K562 (cell line): ENCODE measurements at regions of chr7 and their contacts with region 1.

Region 1: GRCh38 chr7:100081535-100082102 is at the start of gene ZNF3:
- DNase-seq: peak; percentile 92 to 100 (median 95)
- ATAC-seq: peak; percentile 92
- H3K4me3 ChIP-seq: peak within 1 kb of the TSS; percentile 67
- H3K27ac ChIP-seq: peak within 1 kb of the TSS; percentile 90
- H3K4me1 ChIP-seq: peaks cover 10 to 26% of the 10 kb centered on the region in 2 experiments; a peak in 4 of 5 replicates
- H3K27me3 ChIP-seq: no peaks in the 10 kb centered on the region
- CTCF ChIP-seq: peak; percentile 94 to 96 (median 95)
- EP300 ChIP-seq: peak; percentile 79
- POLR2A ChIP-seq: peak; percentile 84
- RAD21 ChIP-seq: peak; percentile 86 to 91
- polyA plus RNA-seq, gene ZNF3: 30.0 to 51.5 TPM

Region 2: DNA sequence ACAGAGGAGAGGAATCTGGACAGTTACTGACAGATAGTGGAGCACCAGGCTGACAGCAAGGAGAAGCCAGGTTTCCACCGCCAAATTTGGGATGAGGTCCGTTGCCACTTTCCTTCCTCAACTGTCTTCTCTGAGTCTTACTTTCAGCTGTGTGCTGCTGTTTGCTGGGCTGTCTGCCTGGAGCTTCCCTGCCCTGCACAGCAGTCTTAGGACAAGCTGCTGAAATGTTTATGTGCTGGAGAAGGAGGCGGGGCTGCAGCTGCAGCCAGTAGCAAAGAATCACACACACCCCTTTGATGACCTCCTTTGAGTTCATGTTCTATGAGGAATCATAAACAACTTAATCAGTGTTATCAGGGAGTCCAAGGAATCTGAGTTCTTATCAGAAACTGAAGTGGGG is 329.2 kb before region 1 on chr7:
- CTCF ChIA-PET with region 1: no interaction called
- POLR2A ChIA-PET with region 1: no interaction called
- in situ Hi-C with region 1: no loop called
- intact Hi-C with region 1: no loop called
- DNase-seq: peak in 1 of 4 experiments; percentile 32
- ATAC-seq: peak; percentile 75
- H3K4me3 ChIP-seq: no peak overlapping the region
- H3K27ac ChIP-seq: no peak overlapping the region
- H3K4me1 ChIP-seq: peaks cover 0 to 9% of the 10 kb centered on the region in 2 experiments; a peak in 4 of 5 replicates
- H3K27me3 ChIP-seq: no peaks in the 10 kb centered on the region; a peak in 1 of 5 replicates
- CTCF ChIP-seq: no peak
- EP300 ChIP-seq: no peak
- POLR2A ChIP-seq: no peak
- RAD21 ChIP-seq: no peak

Region 3: DNA sequence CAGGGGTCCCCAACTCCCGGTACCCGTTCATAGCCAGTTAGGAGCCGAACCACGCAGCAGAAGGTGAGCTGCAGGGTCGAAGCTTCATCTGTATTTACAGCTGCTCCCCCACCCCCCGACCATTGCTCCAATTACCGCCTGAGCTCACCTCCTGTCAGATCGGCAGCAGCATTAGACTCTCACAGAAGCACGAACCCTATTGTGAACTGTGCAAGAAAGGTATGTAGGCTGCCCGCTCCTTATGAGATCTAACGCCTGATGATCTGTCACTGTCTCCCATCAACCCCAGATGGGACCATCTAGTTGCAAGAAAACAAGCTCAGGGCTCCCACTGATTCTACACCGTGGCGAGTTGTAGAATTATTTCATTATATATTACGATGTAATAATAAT is 91.2 kb before region 1 on chr7:
- CTCF ChIA-PET with region 1: interaction called, 5 read pairs
- POLR2A ChIA-PET with region 1: interaction called, 4 read pairs
- in situ Hi-C with region 1: no loop called
- intact Hi-C with region 1: loop called (anchors 1 kb)
- DNase-seq: no peak
- ATAC-seq: no peak
- H3K4me3 ChIP-seq: no peak overlapping the region
- H3K27ac ChIP-seq: no peak overlapping the region
- H3K4me1 ChIP-seq: peaks cover 7 to 16% of the 10 kb centered on the region in 2 experiments; a peak in 3 of 5 replicates
- H3K27me3 ChIP-seq: peaks cover 24 to 45% of the 10 kb centered on the region in 2 experiments
- CTCF ChIP-seq: no peak
- EP300 ChIP-seq: no peak
- POLR2A ChIP-seq: no peak
- RAD21 ChIP-seq: no peak

Region 4: GRCh38 chr7:100013328-100013676 is 68.3 kb before region 1 on chr7:
- CTCF ChIA-PET with region 1: interaction called, 3 read pairs
- POLR2A ChIA-PET with region 1: no interaction called
- in situ Hi-C with region 1: no loop called
- intact Hi-C with region 1: loop called (anchors 5 kb)
- DNase-seq: no peak
- ATAC-seq: no peak
- H3K4me3 ChIP-seq: no peak overlapping the region
- H3K27ac ChIP-seq: no peak overlapping the region
- H3K4me1 ChIP-seq: peaks cover 14 to 17% of the 10 kb centered on the region in 2 experiments; a peak in 4 of 5 replicates
- H3K27me3 ChIP-seq: peaks cover 17 to 27% of the 10 kb centered on the region in 2 experiments
- CTCF ChIP-seq: no peak
- EP300 ChIP-seq: no peak
- POLR2A ChIP-seq: no peak
- RAD21 ChIP-seq: no peak

Region 5: DNA sequence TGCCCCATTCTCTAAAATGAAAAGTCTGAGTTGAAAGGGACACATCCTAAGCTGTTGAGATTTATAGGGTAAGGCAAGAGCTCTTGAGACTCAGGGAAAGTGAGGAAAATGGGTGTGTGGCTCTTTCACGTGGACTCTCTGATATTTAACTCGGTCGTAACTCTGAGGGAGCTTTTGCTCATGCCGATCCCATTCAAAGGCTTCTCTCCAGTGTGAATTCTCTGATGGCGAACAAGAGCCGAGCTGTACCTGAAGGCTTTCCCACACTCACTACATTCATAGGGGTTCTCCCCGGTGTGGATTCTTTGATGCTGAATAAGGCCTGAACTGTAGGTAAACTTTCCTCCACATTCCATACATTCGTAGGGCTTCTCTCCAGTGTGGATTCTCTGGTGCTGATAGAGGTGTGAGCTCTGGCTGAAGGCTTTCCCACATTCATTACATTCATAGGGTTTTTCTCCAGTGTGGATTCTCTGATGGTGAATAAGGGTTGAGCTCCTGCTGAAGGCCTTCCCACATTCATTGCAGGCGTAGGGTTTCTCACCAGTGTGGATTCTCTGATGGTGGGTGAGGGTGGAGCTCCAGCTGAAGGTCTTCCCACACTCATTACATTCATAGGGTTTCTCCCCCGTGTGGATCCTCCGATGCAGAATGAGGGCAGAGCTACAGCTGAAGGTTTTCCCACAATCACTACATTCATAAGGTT is 10.4 kb before region 1 on chr7:
- CTCF ChIA-PET with region 1: interaction called, 5 read pairs
- POLR2A ChIA-PET with region 1: interaction called, 17 read pairs
- in situ Hi-C with region 1: no loop called
- intact Hi-C with region 1: no loop called
- DNase-seq: peak in 1 of 4 experiments; percentile 18
- ATAC-seq: peak; percentile 48
- H3K4me3 ChIP-seq: no peak overlapping the region
- H3K27ac ChIP-seq: no peak overlapping the region
- H3K4me1 ChIP-seq: no peaks in the 10 kb centered on the region; a peak in 1 of 5 replicates
- H3K27me3 ChIP-seq: no peaks in the 10 kb centered on the region
- CTCF ChIP-seq: no peak
- EP300 ChIP-seq: no peak
- POLR2A ChIP-seq: peak; percentile 67
- RAD21 ChIP-seq: no peak

Region 6: DNA sequence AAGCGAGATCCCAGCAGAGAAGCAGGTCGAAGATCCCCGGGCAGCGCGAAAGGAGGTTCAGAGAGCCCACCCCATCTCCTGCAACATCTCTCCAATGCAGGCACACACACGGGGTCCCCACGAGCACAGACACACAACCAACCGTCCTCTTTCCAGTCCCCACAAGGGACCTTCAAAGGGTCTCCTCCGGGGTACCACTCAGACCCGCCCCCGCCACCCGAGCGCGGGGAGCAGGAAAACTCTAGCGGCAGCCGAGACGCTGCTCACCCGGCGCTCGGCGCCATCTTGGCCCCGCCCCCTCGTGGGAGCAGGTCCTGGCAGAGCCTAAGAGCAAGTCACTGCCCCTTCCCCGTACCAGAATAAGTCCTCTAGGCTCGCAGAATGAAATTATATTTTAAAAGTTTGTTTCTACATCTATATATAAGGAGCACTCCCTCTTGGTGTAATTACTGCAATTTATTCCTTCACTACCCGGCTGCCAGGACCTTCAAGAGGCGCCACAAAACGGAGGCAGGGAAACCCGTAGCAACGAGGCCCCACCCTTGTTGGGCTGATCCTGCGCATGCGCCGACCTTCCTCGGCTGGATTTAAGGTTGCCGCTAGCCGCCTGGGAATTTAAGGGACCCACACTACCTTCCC is 37.6 kb after region 1 on chr7 and contains the starts of genes CNPY4 and TAF6:
- CTCF ChIA-PET with region 1: no interaction called
- POLR2A ChIA-PET with region 1: interaction called, 5 read pairs
- in situ Hi-C with region 1: no loop called
- intact Hi-C with region 1: loop called (anchors 1 kb)
- DNase-seq: peak; percentile 99 to 100 (median 99)
- ATAC-seq: peak; percentile 88
- H3K4me3 ChIP-seq: peak within 1 kb of the TSS; percentile 72
- H3K27ac ChIP-seq: peak within 1 kb of the TSS; percentile 88
- H3K4me1 ChIP-seq: peaks cover 20 to 38% of the 10 kb centered on the region in 2 experiments; a peak in 4 of 5 replicates
- H3K27me3 ChIP-seq: no peaks in the 10 kb centered on the region
- CTCF ChIP-seq: no peak; a peak in 1 of 6 replicates
- EP300 ChIP-seq: no peak; the same call in 1 of the 2 replicates
- POLR2A ChIP-seq: peak; percentile 93
- RAD21 ChIP-seq: no peak
- polyA plus RNA-seq, gene CNPY4: 1.9 to 6.3 TPM
- polyA plus RNA-seq, gene TAF6: 0.78 to 0.83 TPM

Region 7: GRCh38 chr7:100819551-100819950 is 737.9 kb after region 1 on chr7:
- CTCF ChIA-PET with region 1: no interaction called
- POLR2A ChIA-PET with region 1: no interaction called
- in situ Hi-C with region 1: no loop called
- intact Hi-C with region 1: no loop called
- DNase-seq: peak in 2 of 4 experiments; percentile 15 to 19
- ATAC-seq: no peak
- H3K4me3 ChIP-seq: no peak overlapping the region
- H3K27ac ChIP-seq: no peak overlapping the region
- H3K4me1 ChIP-seq: peaks cover 0 to 41% of the 10 kb centered on the region in 2 experiments; a peak in 4 of 5 replicates
- H3K27me3 ChIP-seq: no peaks in the 10 kb centered on the region
- CTCF ChIP-seq: no peak
- EP300 ChIP-seq: no peak
- POLR2A ChIP-seq: no peak
- RAD21 ChIP-seq: no peak